ENCODE measurements at regions of chr7 and their contacts with region 1.

Region 1: DNA sequence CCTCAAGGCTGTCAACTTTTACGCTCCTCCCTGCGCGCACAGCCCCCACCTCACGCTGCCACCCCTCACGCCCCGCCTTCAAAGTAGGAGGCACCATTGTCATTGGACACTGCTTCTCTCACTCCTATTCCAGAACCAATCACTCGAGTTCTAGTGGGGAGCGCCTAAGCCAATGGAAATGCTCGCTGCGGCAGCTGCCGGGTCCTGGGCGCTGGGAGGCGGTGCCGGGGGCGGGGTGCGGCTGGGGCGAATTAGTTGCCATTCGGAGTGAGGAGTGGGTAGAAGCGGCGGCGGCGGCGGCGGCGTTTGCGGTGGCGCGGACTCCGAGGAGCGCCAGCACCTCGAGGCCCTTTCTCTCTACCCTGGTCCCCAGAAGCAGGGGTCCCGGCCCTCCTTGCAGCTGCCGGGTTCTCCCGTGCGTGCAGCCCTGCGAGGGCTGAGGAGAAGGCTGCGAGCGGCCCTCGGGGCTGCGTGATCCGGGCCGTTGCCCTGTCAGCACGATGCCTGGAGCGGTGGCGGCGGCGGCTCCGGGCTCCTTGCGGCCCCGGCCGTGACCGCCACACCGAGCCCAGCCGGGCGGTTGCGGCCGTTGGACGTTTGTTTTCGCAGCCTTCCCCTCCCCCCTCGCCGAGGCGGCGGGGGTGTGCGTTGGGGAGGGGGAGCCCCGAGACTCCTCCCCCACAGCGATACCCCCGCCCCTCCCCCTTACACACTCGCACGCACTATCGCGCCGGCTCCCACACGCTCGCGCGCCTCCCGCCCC is at the start of gene GLCCI1:
- DNase-seq: peak; percentile 98
- ATAC-seq: peak; percentile 92
- H3K4me3 Mint-ChIP-seq: peak within 1 kb of the TSS; percentile 89
- H3K27ac Mint-ChIP-seq: peak within 1 kb of the TSS; percentile 89
- H3K4me1 Mint-ChIP-seq: peaks cover 19% of the 10 kb centered on the region
- H3K27me3 Mint-ChIP-seq: no peaks in the 10 kb centered on the region
- total RNA-seq, gene GLCCI1: 37.7 to 43.6 TPM

Region 2: GRCh38 chr7:7902845-7903244 is 65.9 kb before region 1 on chr7:
- CTCF ChIA-PET with region 1: no interaction called
- DNase-seq: no peak
- ATAC-seq: peak; percentile 27
- H3K4me3 Mint-ChIP-seq: no peak overlapping the region
- H3K27ac Mint-ChIP-seq: peak overlapping the region; percentile 44
- H3K4me1 Mint-ChIP-seq: peaks cover 12% of the 10 kb centered on the region
- H3K27me3 Mint-ChIP-seq: no peaks in the 10 kb centered on the region

Region 3: DNA sequence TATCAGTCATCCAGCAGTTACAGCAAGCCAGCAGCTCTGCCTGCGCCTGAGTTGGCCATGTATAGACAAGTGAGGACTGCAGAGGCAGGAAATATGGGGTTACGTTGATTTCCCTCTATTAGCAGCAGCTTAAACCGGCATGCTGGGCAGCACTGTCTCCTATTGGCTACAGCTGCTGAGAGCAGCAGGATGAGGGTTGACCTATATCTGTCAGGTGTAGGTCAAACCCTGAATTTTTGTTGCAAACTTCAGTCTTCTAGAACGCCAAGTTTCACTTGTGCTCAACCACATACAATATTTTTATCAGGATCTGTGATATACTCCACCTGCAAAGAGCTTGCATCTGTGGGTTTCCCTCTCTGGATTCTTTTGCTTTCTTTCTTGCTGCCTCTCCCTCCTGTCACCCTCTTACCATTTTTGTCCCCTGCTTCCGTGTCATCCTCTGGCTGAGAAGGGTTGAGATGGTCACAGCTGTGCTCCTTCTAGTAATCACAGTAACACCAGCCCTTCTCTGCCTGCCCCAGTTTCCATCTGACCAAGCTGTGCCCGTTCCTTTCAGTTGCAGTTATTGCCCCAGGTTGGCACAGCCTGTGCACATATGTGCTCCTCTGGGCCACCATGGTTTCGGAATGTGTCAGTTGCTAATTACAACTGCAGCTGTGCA is 24.0 kb before region 1 on chr7:
- CTCF ChIA-PET with region 1: interaction called, 12 read pairs
- DNase-seq: peak; percentile 90
- ATAC-seq: peak; percentile 94
- H3K4me3 Mint-ChIP-seq: peak overlapping the region; percentile 75
- H3K27ac Mint-ChIP-seq: peak overlapping the region; percentile 96
- H3K4me1 Mint-ChIP-seq: peaks cover 38% of the 10 kb centered on the region
- H3K27me3 Mint-ChIP-seq: no peaks in the 10 kb centered on the region

Region 4: GRCh38 chr7:8190119-8190895 is 221.6 kb after region 1 on chr7:
- CTCF ChIA-PET with region 1: interaction called, 14 read pairs
- DNase-seq: peak; percentile 79
- ATAC-seq: peak; percentile 87
- H3K4me3 Mint-ChIP-seq: no peak overlapping the region
- H3K27ac Mint-ChIP-seq: peak overlapping the region; percentile 45
- H3K4me1 Mint-ChIP-seq: peaks cover 31% of the 10 kb centered on the region
- H3K27me3 Mint-ChIP-seq: peaks cover 2% of the 10 kb centered on the region